ENCODE measurements at regions of chr2 and their contacts with region 1.

Region 1: GRCh38 chr2:105118960-105119359 is 81.1 kb downstream of the MRPS9 start:
- DNase-seq: no peak
- H3K4me3 ChIP-seq: no peak overlapping the region
- CTCF ChIP-seq: no peak
- POLR2A ChIP-seq: no peak

Region 2: DNA sequence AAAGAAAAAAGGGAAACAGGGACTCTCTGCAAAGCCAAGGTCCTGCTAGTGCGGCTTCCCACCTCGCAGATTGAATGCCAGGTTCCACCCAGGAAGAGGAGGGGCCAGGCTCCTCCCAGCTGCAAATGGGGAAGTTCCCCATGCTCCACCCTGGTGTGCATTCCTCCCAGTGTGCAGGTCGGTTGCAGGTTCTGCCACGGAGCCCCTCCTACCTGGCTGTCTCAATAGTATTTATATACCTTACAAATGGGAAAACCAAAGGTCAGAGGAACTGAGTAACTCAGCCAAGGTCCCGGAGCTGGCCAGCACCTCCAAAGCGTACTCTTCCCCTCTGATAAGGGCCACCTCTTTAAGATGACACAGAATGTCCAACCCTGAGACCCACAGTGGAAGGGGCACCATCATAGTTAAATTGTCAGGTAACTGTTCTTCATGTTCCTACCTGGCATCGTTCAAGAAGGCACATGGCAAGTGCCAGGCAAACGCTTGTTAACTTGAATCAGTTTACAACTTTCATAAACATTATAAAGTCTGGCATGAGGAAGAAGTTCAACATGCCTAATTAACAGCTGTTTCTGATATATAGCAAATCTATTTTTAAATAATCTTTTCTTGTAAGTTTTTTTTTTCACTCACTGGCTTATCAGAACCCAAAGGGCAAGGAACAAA is 229.5 kb before region 1 on chr2:
- intact Hi-C with region 1: no loop called
- DNase-seq: no peak
- H3K4me3 ChIP-seq: no peak overlapping the region
- CTCF ChIP-seq: no peak
- POLR2A ChIP-seq: no peak

Region 3: DNA sequence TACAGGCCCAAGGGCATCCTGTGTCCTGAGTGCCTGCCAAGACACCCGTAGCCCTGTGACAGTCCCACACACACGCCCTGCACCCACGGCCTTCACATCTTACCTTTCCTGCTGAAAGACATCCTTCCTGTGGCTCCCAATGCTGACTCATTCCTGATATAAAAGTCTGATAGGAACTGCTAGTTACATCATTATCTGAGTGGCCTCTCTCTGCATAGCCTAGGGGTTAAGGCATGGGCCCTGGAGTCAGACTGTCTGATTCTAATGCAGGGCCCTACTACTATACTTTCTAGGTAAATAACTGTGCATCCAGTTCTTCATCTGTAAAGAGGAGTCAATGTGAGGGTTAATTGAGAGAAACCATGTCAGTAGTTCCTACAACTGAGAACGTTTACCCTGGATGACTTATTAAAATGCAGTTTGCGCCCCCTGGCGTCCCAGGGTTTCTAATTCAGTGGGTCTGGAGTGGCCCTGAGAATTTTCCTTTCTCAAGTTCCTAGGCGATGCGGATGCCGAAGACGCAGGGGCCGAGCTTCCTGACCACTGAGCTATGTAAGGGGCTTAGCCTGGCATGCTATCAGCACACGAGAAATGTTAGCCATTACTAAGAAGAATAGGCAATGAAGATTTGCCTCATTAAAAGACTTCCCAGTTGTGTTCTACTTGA is 116.6 kb after region 1 on chr2:
- intact Hi-C with region 1: loop called (anchors 5 kb)
- DNase-seq: peak; percentile 66 to 92
- H3K4me3 ChIP-seq: no peak overlapping the region
- CTCF ChIP-seq: no peak
- POLR2A ChIP-seq: no peak